GM13976 (cell line): ENCODE measurements at regions of chr2 and their contacts with region 1.

Region 1: GRCh38 chr2:43127208-43127940 is 99.0 kb downstream of the ZFP36L2 start:
- DNase-seq: peak; percentile 89
- CTCF ChIP-seq: peak; percentile 69

Region 2: DNA sequence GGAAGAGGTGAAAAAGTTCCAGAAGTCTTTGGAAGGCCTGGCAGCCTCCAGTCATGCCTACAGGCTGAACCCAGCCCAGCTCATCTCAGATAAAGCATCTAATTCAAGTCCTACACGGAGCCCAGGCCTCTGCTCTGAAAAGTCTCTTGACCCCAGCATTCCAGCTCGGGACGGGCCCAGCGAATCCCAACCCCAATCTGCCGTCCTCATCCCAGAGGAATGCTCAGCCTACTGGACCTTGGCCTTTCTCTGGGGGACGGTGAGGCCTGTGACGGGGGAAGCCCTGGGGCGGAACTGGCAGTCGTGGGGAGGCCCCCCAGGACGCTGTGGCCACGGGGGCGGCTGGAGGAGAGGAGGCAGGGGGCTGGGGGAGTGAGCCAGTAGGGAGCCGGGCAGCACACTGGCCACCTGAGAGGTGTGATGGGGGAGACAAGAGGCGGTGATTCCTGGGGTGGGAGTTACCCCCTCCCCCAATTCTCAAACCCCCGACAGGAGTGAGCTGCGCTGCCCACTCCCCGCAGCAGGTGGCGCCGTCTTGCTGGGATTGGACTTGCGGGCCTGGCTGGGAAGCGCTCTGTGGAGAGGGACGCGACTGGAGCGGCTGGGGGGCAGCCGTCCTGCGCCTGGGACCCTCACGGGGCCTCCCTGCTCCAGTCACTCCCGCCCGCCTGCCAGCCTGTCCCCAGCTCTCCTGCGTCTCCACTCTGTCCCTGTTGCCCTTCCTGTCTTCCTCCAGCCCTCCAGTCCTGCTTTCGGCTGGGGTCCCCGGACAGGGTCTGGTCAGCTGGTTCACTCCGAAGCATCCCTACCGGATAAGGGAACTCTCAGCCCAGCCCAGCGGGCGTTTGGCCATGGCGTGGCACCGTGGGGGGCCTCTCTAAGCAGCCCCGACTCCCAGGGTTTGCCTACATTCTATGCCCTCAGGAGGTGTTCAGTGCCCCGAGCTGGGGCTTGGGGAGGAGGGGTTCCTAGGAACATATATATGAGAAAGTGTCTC is 152.4 kb before region 1 on chr2:
- in situ Hi-C with region 1: loop called (anchors 10 kb)
- DNase-seq: peak; percentile 69
- CTCF ChIP-seq: peak; percentile 78

Region 3: GRCh38 chr2:43226558-43226954 is 99.2 kb after region 1 on chr2 and contains the start of gene ZFP36L2:
- in situ Hi-C with region 1: loop called (anchors 5 kb)
- DNase-seq: peak; percentile 97
- CTCF ChIP-seq: no peak